Thyroid gland (tissue), 4 donors: ENCODE measurements at regions of chr1 and their contacts with region 1.

Region 1: DNA sequence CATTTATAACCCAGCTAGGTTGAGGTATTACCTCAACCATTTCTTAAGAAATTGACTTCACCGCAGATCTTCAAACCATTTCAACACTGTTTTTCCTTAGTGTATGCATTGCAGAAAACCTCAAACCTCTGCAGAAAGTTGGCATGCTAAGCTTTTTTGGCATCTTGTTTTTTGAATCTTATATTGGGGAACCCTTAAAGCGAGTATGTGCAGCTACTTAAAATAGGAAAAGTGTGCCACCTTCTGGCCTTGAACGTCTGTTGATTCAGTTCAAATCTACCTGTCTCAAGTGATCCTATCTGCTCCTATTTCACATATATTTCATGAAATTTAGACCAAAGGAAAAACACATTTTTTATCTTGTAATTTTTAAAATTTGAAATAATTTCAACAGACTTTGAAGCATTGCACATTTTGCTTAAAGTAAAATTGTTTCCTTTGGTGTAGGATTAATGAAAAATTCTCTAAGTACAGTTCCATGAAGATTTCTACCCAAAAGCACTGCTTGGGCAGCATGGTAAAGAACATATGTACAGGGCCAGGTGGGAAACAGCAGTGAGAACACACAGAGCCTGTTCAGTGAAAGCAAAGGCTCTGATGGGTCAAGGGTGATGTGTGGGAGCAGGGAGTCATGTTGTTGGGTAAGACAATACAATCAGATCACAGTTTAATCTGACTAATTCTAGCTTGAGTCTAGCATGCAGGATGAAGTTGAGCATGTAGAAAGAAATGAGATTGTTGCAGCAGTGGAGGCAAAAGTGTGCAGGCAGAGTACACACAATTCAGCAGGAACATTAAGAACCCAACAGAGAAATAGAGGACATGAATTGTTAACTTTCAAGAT is 17.2 kb downstream of the HENMT1 start:
- DNase-seq: peak; percentile 57 to 60
- H3K4me3 ChIP-seq: no peak overlapping the region
- H3K27ac ChIP-seq: no peak overlapping the region
- H3K4me1 ChIP-seq: peaks cover 0 to 3% of the 10 kb centered on the region in 2 donors
- H3K27me3 ChIP-seq: no peaks in the 10 kb centered on the region
- CTCF ChIP-seq: peak in 5 of 6 experiments; percentile 11 to 83 (median 68)
- POLR2A ChIP-seq: no peak

Region 2: DNA sequence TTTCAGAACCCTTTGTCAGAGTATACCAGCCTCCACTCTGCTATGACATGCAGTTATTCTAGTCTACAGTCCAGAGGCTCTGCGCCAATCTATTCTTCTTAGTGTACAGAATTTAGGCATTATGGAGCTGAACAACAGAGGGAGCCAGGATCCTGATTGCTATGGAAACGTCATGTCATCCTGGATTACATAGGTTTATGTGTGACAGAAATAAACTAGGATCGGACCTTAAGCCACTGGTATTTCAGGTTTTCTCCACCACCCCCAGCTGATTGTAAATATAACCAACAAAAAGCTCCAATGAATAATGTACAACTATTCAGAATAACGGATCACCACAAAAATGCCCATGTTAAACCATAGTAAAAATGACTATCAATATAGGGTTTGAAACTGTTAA is 131.9 kb before region 1 on chr1:
- intact Hi-C with region 1: loop called (anchors 2 kb)
- DNase-seq: no peak
- H3K4me3 ChIP-seq: no peak overlapping the region
- H3K27ac ChIP-seq: no peak overlapping the region
- H3K4me1 ChIP-seq: no peaks in the 10 kb centered on the region
- H3K27me3 ChIP-seq: no peaks in the 10 kb centered on the region
- CTCF ChIP-seq: no peak
- POLR2A ChIP-seq: no peak